Activated naive CD8-positive, alpha-beta T cell treated with anti-CD3 and anti-CD28 coated beads, Interleukin-2, amount 10 ng/mL, durations not matched to agents 7 days and 5 days (primary cell): ENCODE measurements at regions of chr19 and their contacts with region 1.

Region 1: DNA sequence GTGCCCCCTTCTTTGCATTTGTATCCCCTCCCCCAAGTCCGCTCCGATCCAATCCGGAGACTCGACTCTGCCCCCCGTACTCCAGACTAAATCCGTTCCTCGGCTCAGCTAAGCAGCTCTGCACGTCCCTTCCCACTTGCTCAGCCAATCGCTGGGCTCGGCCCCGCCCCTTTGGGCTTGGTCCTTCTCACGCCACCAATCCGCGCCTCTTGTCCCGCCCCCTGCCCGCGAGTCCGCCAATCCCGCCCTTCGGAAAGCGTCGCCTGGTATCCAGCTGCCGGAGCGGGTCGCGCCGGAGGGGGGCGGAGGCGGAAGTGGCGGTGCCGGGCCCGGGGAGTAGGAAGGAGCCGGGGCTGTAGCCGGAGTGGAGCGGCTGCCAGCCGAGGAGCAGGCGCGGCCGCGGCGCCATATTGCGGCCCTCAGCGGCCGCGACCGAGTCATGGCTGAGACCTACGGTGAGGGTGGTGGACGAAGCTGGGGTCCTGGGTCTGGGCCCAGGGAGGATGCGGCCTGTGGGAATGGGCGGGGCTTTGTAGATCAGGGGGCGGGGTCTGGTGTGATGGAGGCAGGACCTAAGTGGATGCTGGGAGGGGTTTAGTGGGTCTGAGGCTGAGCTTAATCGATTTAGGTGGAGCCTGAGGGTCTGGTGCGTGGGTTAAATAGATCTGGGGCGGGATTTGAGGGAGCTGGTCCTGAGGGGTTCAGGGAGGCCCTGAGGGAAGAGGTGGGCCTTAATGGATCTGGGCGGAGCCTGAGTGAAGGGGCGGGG is at the start of gene RAB4B:
- DNase-seq: peak; percentile 100
- ATAC-seq: peak; percentile 81
- H3K4me3 Mint-ChIP-seq: peak within 1 kb of the TSS; percentile 98
- H3K27ac Mint-ChIP-seq: peak within 1 kb of the TSS; percentile 98
- H3K4me1 Mint-ChIP-seq: peaks cover 34% of the 10 kb centered on the region
- H3K27me3 Mint-ChIP-seq: no peaks in the 10 kb centered on the region
- total RNA-seq, gene RAB4B: 53.1 to 57.7 TPM

Region 2: DNA sequence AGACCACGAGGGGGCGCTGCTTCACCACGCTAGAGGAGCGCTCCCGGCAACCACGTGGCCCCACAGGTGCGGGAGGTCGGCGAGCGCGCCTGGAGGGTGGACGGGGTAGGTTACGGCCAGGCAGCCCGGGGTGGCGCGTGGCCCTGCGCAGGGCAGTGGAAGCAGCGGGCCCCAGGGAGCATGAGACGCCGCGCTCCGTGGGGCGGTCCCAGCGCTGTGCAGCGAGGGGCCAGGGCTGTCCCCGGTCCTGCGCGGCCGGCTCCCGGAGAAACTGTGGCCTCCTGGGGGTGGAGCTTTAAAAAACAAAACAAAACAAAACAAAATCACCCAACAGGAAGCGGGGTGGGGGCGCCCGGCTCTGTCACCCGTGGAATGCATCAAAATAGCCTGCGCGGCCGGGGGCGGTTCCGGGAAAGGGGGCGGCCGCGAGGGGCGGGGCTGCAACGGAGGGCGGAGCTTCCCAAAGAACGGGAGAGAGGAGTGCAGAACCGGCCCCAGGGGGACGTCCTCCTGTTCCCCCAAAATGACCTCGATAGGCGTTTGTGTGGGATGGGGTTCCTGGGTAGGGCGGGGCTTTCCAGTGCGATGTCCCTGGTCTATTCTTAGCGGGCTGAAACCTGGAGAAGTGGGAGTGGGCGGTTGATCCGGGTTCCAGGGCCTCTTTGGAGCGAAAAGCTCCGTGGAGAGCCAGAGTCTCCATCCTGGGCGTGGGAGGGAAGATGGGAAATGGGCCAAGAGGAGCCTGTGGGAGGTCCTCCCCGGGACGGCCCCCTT is 115.0 kb before region 1 on chr19:
- POLR2A ChIA-PET with region 1: interaction called, 11 read pairs
- DNase-seq: peak; percentile 97
- ATAC-seq: peak; percentile 92
- H3K4me3 Mint-ChIP-seq: peak overlapping the region; percentile 84
- H3K27ac Mint-ChIP-seq: peak overlapping the region; percentile 72
- H3K4me1 Mint-ChIP-seq: peaks cover 2% of the 10 kb centered on the region
- H3K27me3 Mint-ChIP-seq: peaks cover 2% of the 10 kb centered on the region

Region 3: DNA sequence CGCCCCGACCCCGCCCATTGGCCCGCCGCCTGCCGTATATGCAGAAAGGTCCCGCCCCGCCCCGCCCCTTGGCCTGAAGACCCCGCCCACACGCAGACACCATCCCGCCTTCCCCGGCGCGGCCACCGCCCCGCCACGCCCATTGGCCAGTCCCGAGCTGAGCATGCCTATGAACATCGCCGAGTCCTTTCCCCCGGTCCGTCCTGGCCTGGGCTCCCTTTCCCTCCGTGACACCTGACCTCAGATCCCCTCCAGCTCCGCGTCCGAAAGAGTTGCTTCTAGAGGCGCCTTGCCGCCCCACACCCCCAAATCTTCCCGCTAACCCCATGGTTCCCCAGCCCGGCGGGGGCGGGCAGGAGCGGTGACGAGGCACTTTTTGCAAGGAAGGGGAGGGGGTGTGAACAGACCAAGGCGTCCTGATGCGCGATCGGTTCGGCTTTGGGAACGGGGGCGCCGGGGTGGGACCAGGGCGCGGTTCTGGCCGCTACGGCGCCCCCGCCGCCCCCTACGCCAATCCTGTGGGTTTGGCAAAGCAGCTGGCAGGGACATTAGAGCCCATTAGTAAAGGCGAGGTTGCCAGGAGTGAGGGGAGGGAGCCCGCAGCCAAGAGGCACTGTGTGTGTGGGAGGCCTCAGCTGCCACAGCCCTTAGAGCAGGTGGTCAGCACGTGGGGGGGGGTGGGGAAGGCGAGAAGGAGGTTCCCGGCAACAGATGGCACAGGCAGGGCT is 87.3 kb before region 1 on chr19:
- POLR2A ChIA-PET with region 1: no interaction called
- DNase-seq: peak; percentile 86
- ATAC-seq: peak; percentile 82
- H3K4me3 Mint-ChIP-seq: peak overlapping the region; percentile 85
- H3K27ac Mint-ChIP-seq: peak overlapping the region; percentile 78
- H3K4me1 Mint-ChIP-seq: peaks cover 3% of the 10 kb centered on the region
- H3K27me3 Mint-ChIP-seq: no peaks in the 10 kb centered on the region

Region 4: GRCh38 chr19:40750059-40750873 is 27.9 kb before region 1 on chr19 and contains the start of gene ACTMAP:
- POLR2A ChIA-PET with region 1: interaction called, 92 read pairs
- DNase-seq: peak; percentile 97
- ATAC-seq: peak; percentile 89
- H3K4me3 Mint-ChIP-seq: peak within 1 kb of the TSS; percentile 97
- H3K27ac Mint-ChIP-seq: peak within 1 kb of the TSS; percentile 99
- H3K4me1 Mint-ChIP-seq: peaks cover 37% of the 10 kb centered on the region
- H3K27me3 Mint-ChIP-seq: no peaks in the 10 kb centered on the region
- total RNA-seq, gene ACTMAP: 13.5 to 15.6 TPM

Region 5: DNA sequence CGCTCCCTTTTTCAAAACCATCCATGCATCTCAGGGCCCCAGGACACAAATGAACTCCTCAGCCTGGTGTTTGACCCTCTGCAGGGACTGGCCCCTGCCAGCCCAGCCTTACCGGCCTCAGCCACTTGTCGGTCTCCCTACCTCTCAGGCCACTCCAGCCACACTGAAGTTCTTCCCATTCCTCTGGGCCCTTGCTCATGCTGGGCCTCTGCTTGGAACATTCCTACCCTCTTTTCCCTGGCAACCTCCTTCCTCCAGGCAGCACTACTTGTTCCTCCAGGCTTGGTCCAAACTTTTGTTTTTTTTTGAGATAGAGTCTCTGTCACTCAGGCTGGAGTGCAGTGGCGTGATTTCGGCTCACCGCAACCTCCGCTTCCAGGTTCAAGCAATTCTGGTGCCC is 13.2 kb after region 1 on chr19:
- POLR2A ChIA-PET with region 1: interaction called, 79 read pairs
- DNase-seq: no peak
- ATAC-seq: no peak
- H3K4me3 Mint-ChIP-seq: no peak overlapping the region
- H3K27ac Mint-ChIP-seq: no peak overlapping the region
- H3K4me1 Mint-ChIP-seq: peaks cover 11% of the 10 kb centered on the region
- H3K27me3 Mint-ChIP-seq: no peaks in the 10 kb centered on the region

Region 6: DNA sequence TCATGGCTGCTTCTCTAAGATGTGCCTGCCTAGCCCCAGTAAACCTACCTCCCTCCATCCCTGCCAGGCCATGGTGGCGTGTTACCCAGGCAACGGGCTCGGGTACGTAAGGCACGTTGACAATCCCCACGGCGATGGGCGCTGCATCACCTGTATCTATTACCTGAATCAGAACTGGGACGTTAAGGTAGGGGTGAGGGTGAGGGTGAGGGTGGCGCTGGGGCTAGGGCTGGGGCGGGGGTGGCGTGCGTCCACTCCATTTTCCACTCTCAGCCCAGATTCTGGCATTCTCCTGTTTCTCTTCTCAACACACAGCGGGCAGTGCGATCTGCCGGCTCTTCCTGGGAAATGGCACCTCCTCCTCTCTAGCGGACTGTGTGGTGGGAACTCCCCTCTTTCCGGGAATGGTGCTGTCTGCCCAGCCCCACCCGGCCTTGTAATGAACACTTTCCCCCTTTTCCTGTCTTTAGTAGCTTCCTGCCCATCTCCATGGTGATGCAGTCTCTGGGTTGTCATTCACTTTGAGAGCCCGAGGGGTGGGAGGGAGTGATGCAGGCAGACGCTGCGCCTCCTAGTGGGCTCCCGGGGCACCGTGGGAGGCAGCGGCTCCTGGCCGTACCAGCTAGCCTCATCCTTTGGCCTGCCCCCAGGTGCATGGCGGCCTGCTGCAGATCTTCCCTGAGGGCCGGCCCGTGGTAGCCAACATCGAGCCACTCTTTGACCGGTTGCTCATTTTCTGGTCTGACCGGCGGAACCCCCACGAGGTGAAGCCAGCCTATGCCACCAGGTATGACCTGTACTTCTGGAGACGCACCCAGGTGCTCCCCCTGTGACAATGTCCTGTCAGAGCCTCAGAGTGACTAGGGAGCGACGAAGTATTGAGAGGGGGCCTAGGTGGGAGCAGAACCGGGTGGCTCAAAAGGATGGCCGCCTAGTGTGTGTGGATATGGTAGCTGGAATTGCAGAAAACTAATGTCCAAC is 28.7 kb after region 1 on chr19:
- POLR2A ChIA-PET with region 1: interaction called, 57 read pairs
- DNase-seq: peak; percentile 84
- ATAC-seq: peak; percentile 40
- H3K4me3 Mint-ChIP-seq: peak overlapping the region; percentile 98
- H3K27ac Mint-ChIP-seq: peak overlapping the region; percentile 93
- H3K4me1 Mint-ChIP-seq: peaks cover 72% of the 10 kb centered on the region
- H3K27me3 Mint-ChIP-seq: peaks cover 4% of the 10 kb centered on the region

Region 7: DNA sequence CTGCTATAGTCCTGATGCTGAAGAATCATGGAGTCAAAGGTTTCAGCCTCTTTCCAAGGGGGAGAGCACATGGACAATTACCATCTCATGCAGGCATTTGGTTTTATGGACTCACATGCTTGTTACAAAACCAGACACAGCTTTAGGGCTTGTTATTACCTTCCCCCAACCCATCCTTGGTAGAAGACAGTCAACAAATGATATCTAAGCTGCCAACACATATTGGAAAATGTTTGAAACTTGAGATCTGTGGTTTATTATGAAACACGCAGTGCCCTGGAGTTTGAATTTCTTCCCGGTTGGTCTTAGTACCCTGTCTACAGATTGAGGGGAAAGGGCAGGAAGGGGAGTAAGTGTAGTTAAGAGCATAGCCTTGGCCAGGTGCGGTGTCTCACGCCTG is 84.7 kb after region 1 on chr19:
- POLR2A ChIA-PET with region 1: no interaction called
- DNase-seq: no peak
- ATAC-seq: no peak
- H3K4me3 Mint-ChIP-seq: no peak overlapping the region
- H3K27ac Mint-ChIP-seq: no peak overlapping the region
- H3K4me1 Mint-ChIP-seq: no peaks in the 10 kb centered on the region
- H3K27me3 Mint-ChIP-seq: peaks cover 28% of the 10 kb centered on the region